Calu3 (cell line): ENCODE measurements at regions of chr2 and their contacts with region 1.

Region 1: GRCh38 chr2:222318026-222318711 is 19.4 kb upstream of the PAX3 start:
- DNase-seq: peak; percentile 85
- H3K4me3 Mint-ChIP-seq: peak overlapping the region; percentile 97
- H3K27ac Mint-ChIP-seq: peak overlapping the region; percentile 42
- H3K4me1 Mint-ChIP-seq: no peaks in the 10 kb centered on the region
- H3K27me3 Mint-ChIP-seq: peaks cover 18% of the 10 kb centered on the region
- CTCF ChIP-seq: peak; percentile 32

Region 2: GRCh38 chr2:222057347-222058073 is 260.7 kb before region 1 on chr2:
- CTCF ChIA-PET with region 1: interaction called, 5 read pairs
- intact Hi-C with region 1: loop called (anchors 5 kb)
- DNase-seq: no peak
- H3K4me3 Mint-ChIP-seq: no peak overlapping the region
- H3K27ac Mint-ChIP-seq: no peak overlapping the region
- H3K4me1 Mint-ChIP-seq: peaks cover 7% of the 10 kb centered on the region
- H3K27me3 Mint-ChIP-seq: peaks cover 82% of the 10 kb centered on the region
- CTCF ChIP-seq: peak; percentile 65

Region 3: DNA sequence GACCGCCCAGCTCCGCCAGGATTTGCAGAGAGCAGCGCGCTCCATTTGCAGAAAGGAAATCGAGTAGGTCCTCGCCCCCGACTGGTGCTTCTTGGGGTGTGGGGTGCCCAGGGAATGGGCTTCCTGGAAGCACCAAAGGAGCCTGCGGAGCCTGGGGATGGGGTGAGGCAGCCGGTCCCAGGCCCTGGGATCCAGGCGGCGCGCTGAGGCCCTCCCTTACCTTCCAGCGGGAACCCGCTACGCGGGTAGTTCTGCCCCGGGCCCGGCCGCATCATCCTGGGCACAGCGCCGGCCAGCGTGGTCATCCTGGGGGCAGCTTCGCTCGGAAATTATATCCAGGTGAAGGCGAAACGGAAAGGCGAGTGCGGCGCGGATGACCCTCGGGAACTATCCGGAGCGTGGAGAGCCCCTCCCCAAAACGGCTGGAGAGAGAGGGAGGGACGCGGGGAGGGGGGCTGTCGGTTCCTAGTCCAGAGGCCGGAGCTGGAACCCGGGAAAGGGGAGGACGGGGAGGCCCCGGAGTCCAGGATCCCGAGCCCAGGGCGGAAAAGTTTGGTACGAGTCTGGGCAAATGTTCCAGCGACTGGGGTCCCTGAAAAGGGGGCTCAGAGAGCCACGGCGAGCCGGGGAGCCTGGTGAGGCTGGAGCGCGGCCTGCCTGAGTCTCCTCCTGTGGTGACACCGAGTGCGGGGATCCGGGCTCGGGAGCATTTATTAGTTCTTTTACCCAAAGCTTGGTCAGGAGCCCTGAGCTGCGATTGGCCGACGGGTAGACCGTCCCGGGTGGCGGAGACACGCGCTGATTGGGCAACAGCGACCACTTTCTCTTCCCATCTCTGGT is 19.6 kb before region 1 on chr2 and contains the start of gene PAX3:
- CTCF ChIA-PET with region 1: no interaction called
- intact Hi-C with region 1: no loop called
- DNase-seq: no peak
- H3K4me3 Mint-ChIP-seq: no peak within 1 kb of the TSS
- H3K27ac Mint-ChIP-seq: no peak within 1 kb of the TSS
- H3K4me1 Mint-ChIP-seq: no peaks in the 10 kb centered on the region
- H3K27me3 Mint-ChIP-seq: peaks cover 88% of the 10 kb centered on the region
- CTCF ChIP-seq: no peak
- total RNA-seq, gene PAX3: not detected in 2 replicates

Region 4: GRCh38 chr2:222424729-222425671 is 106.8 kb after region 1 on chr2:
- CTCF ChIA-PET with region 1: interaction called, 11 read pairs
- intact Hi-C with region 1: no loop called
- DNase-seq: peak; percentile 46
- H3K4me3 Mint-ChIP-seq: peak overlapping the region; percentile 93
- H3K27ac Mint-ChIP-seq: peak overlapping the region; percentile 99
- H3K4me1 Mint-ChIP-seq: peaks cover 35% of the 10 kb centered on the region
- H3K27me3 Mint-ChIP-seq: no peaks in the 10 kb centered on the region
- CTCF ChIP-seq: no peak

Region 5: GRCh38 chr2:222433332-222434173 is 115.4 kb after region 1 on chr2:
- CTCF ChIA-PET with region 1: interaction called, 3 read pairs
- intact Hi-C with region 1: loop called (anchors 2 kb)
- DNase-seq: peak; percentile 53
- H3K4me3 Mint-ChIP-seq: peak overlapping the region; percentile 57
- H3K27ac Mint-ChIP-seq: peak overlapping the region; percentile 94
- H3K4me1 Mint-ChIP-seq: peaks cover 58% of the 10 kb centered on the region
- H3K27me3 Mint-ChIP-seq: no peaks in the 10 kb centered on the region
- CTCF ChIP-seq: no peak

Region 6: GRCh38 chr2:222483513-222484039 is 165.4 kb after region 1 on chr2:
- CTCF ChIA-PET with region 1: interaction called, 8 read pairs
- intact Hi-C with region 1: loop called (anchors 2 kb)
- DNase-seq: peak; percentile 16
- H3K4me3 Mint-ChIP-seq: no peak overlapping the region
- H3K27ac Mint-ChIP-seq: no peak overlapping the region
- H3K4me1 Mint-ChIP-seq: no peaks in the 10 kb centered on the region
- H3K27me3 Mint-ChIP-seq: no peaks in the 10 kb centered on the region
- CTCF ChIP-seq: no peak

Region 7: DNA sequence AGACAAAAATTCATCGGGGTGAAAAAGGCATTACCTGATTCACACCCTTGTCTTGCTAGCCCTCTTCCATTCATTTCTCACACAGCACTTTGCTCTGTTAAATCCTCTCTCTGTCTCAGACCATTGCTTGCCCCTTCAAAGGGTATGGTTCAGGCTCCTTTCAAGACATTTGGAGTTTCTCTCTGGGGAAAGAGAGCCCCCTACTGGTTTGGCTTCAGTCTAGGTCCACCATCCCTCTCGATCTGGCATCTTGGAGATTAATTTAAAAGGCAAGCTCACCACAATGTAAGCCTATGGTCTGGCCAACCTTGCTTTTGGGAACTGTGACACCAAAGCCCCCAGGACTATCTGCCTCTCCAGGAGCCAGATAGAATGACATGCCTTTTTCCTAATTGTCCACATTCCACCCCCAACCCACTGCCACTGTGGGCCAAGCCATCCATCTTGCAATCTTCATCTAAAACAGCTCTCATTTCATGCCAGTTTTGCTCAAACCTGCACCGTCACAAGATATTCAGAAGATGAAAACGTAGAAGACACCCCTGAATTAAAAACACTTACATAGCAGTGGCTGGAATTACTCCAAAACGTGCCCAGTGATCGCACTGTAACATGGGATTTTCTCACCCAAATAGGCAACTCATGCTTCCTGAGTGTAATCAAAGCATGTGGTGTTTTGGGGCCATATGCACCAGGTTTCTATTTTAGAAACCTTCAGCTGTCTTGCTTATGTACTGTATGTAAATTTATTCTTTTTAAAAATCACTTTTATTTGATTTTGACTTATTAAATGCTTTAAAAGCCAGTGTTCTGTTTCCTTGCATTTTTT is 243.9 kb after region 1 on chr2:
- CTCF ChIA-PET with region 1: interaction called, 30 read pairs
- intact Hi-C with region 1: loop called (anchors 1 kb)
- DNase-seq: peak; percentile 72
- H3K4me3 Mint-ChIP-seq: no peak overlapping the region
- H3K27ac Mint-ChIP-seq: peak overlapping the region; percentile 66
- H3K4me1 Mint-ChIP-seq: no peaks in the 10 kb centered on the region
- H3K27me3 Mint-ChIP-seq: no peaks in the 10 kb centered on the region
- CTCF ChIP-seq: peak; percentile 64

Region 8: GRCh38 chr2:222613715-222614331 is 295.7 kb after region 1 on chr2:
- CTCF ChIA-PET with region 1: no interaction called
- intact Hi-C with region 1: loop called (anchors 1 kb)
- DNase-seq: peak; percentile 13
- H3K4me3 Mint-ChIP-seq: no peak overlapping the region
- H3K27ac Mint-ChIP-seq: no peak overlapping the region
- H3K4me1 Mint-ChIP-seq: no peaks in the 10 kb centered on the region
- H3K27me3 Mint-ChIP-seq: no peaks in the 10 kb centered on the region
- CTCF ChIP-seq: peak; percentile 70